Activated CD4-positive, alpha-beta memory T cell treated with anti-CD3 and anti-CD28 coated beads for 36 hours (primary cell): ENCODE measurements at regions of chr19 and their contacts with region 1.

Region 1: DNA sequence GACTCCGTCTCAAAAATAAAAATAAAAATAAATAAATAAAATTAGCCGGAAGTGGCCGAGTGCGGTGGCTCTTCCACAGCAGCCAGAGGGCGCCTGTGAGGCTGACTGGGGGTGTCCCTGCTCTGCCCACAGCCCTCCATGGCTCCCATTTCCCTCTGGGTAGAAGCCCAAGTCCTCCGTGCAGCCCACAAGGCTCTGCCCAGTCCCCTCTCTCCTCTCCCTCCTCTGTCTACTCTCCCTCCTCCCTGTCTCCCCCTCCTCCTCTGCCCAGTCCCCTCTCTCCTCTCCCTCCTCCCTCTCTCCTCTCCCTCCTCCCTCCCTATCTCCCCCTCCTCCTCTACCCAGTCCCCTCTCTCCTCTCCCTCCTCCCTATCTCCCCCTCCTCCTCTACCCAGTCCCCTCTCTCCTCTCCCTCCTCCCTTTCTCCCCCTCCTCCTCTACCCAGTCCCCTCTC is 20.4 kb downstream of the MISP start:
- DNase-seq: peak; percentile 62
- H3K4me3 Mint-ChIP-seq: no peak overlapping the region
- H3K27ac Mint-ChIP-seq: no peak overlapping the region
- H3K4me1 Mint-ChIP-seq: peaks cover 3% of the 10 kb centered on the region
- H3K27me3 Mint-ChIP-seq: peaks cover 11% of the 10 kb centered on the region

Region 2: DNA sequence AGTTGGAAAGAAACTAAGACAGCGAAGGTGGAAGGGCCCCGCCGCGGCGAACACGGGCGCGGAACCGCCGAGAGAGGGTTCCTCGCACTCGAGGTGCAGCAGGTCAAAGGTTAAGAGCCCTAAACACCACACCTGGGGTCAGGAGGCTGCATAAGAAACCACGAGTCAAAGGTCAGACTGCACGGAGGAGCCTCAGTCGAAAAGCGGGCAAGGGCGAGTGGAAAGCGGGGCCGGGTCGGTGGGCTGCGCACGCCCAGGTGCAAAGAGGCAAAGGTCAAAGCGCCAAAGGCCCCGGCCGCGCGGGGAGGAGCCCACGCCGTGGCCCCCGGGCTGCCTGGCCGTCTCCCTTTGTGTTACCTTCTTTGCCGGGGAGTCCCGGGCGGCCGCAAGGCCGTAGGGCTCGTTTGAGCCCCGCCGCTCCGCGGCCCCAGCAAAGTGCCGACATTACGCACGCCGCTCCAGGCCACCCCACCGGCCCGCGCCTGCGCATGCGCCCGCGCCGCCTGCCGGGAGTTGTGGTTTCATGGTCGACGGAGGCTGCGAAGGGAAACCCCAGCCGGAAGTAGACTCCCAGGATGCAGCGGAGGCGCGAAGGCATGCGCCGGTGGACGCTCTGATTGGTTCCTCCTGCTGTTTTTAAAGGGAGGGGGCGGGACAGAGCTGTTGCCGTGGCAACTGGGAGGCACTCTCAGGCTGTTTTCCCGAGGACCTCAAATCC is 138.1 kb before region 1 on chr19 and contains the start of gene POLRMT:
- CTCF ChIA-PET with region 1: no interaction called
- POLR2A ChIA-PET with region 1: no interaction called
- intact Hi-C with region 1: no loop called
- DNase-seq: peak; percentile 99
- H3K4me3 Mint-ChIP-seq: peak within 1 kb of the TSS; percentile 96
- H3K27ac Mint-ChIP-seq: peak within 1 kb of the TSS; percentile 84
- H3K4me1 Mint-ChIP-seq: peaks cover 33% of the 10 kb centered on the region
- H3K27me3 Mint-ChIP-seq: no peaks in the 10 kb centered on the region
- total RNA-seq, gene POLRMT: 71.5 to 72.5 TPM

Region 3: GRCh38 chr19:736125-736524 is 35.2 kb before region 1 on chr19:
- CTCF ChIA-PET with region 1: no interaction called
- POLR2A ChIA-PET with region 1: no interaction called
- intact Hi-C with region 1: no loop called
- DNase-seq: no peak
- H3K4me3 Mint-ChIP-seq: no peak overlapping the region
- H3K27ac Mint-ChIP-seq: no peak overlapping the region
- H3K4me1 Mint-ChIP-seq: peaks cover 4% of the 10 kb centered on the region
- H3K27me3 Mint-ChIP-seq: peaks cover 7% of the 10 kb centered on the region

Region 4: GRCh38 chr19:827783-828321 is 56.5 kb after region 1 on chr19 and contains the start of gene AZU1:
- CTCF ChIA-PET with region 1: no interaction called
- POLR2A ChIA-PET with region 1: no interaction called
- intact Hi-C with region 1: no loop called
- DNase-seq: no peak
- H3K4me3 Mint-ChIP-seq: no peak within 1 kb of the TSS
- H3K27ac Mint-ChIP-seq: no peak within 1 kb of the TSS
- H3K4me1 Mint-ChIP-seq: no peaks in the 10 kb centered on the region
- H3K27me3 Mint-ChIP-seq: peaks cover 6% of the 10 kb centered on the region
- total RNA-seq, gene AZU1: not detected

Region 5: GRCh38 chr19:920051-920864 is 148.9 kb after region 1 on chr19:
- CTCF ChIA-PET with region 1: interaction called, 12 read pairs
- POLR2A ChIA-PET with region 1: no interaction called
- intact Hi-C with region 1: loop called (anchors 1 kb)
- DNase-seq: peak; percentile 78
- H3K4me3 Mint-ChIP-seq: peak overlapping the region; percentile 75
- H3K27ac Mint-ChIP-seq: peak overlapping the region; percentile 85
- H3K4me1 Mint-ChIP-seq: peaks cover 19% of the 10 kb centered on the region
- H3K27me3 Mint-ChIP-seq: no peaks in the 10 kb centered on the region